HepG2 (cell line): ENCODE measurements at regions of chr7 and their contacts with region 1.

Region 1: DNA sequence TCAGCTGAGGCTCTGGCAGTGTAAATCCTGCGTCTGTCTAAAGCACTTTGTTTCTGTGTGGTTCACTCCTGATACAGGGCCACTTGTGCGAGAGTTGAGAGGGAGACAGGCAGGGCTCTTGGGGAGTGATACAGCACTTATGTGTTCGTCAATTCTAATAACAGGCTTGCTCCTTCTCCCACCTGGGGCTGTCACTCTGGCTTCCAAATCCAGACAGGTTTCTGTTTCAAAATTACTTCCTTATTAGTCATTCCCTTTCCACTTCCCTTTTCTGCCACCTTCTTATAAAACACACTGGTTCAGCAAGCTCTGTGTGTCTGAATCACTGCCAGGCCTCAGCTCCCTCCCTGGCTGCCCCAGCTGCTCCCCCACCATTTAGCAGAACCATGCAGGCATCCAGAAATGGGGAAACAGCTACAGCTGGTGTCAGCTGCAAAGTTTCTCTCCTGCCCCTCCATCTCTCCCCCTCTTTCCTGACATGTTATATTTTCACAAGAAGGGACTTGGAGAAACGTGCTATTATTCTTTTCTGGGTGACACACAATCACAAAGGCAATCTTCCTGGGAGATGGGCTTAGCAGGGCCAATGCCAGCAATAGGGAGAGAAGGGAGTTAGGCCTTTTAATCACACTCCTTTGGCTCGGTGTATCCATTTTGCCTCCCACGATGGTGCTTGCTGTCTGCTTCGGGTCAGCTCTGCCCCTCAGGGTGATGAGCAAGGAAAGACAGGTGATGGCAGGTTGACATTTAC is 58.4 kb upstream of the ZNRF2 start:
- DNase-seq: no peak
- ATAC-seq: peak; percentile 45; the same call in 2 of the 3 replicates
- H3K4me3 ChIP-seq: peak overlapping the region in 1 of 3 experiments; percentile 60; a peak in 2 of 6 replicates
- H3K27ac ChIP-seq: no peak overlapping the region
- H3K4me1 ChIP-seq: peaks cover 17% of the 10 kb centered on the region
- H3K27me3 ChIP-seq: no peaks in the 10 kb centered on the region
- CTCF ChIP-seq: no peak
- EP300 ChIP-seq: no peak
- POLR2A ChIP-seq: no peak
- RAD21 ChIP-seq: no peak

Region 2: GRCh38 chr7:30164567-30164966 is 61.5 kb before region 1 on chr7:
- CTCF ChIA-PET with region 1: no interaction called
- POLR2A ChIA-PET with region 1: no interaction called
- in situ Hi-C with region 1: no loop called
- intact Hi-C with region 1: loop called (anchors 5 kb)
- DNase-seq: peak; percentile 60
- ATAC-seq: peak; percentile 50
- H3K4me3 ChIP-seq: no peak overlapping the region
- H3K27ac ChIP-seq: no peak overlapping the region
- H3K4me1 ChIP-seq: peaks cover 60% of the 10 kb centered on the region
- H3K27me3 ChIP-seq: no peaks in the 10 kb centered on the region
- CTCF ChIP-seq: peak; percentile 71
- EP300 ChIP-seq: no peak
- POLR2A ChIP-seq: no peak
- RAD21 ChIP-seq: peak; percentile 72

Region 3: GRCh38 chr7:30255064-30255769 is 29.2 kb after region 1 on chr7:
- CTCF ChIA-PET with region 1: no interaction called
- POLR2A ChIA-PET with region 1: interaction called, 5 read pairs
- in situ Hi-C with region 1: no loop called
- intact Hi-C with region 1: loop called (anchors 2 kb)
- DNase-seq: peak; percentile 98
- ATAC-seq: peak; percentile 90
- H3K4me3 ChIP-seq: peak overlapping the region in 1 of 3 experiments; percentile 50; a peak in 1 of 6 replicates
- H3K27ac ChIP-seq: peak overlapping the region; percentile 72
- H3K4me1 ChIP-seq: peaks cover 57% of the 10 kb centered on the region
- H3K27me3 ChIP-seq: no peaks in the 10 kb centered on the region
- CTCF ChIP-seq: no peak; the same call in 1 of the 2 replicates
- EP300 ChIP-seq: peak; percentile 33 to 84; a peak in 2 of 4 replicates
- POLR2A ChIP-seq: no peak
- RAD21 ChIP-seq: 0 out of 2 replicates have a peak, but pooled peaks have one; percentile 30

Region 4: DNA sequence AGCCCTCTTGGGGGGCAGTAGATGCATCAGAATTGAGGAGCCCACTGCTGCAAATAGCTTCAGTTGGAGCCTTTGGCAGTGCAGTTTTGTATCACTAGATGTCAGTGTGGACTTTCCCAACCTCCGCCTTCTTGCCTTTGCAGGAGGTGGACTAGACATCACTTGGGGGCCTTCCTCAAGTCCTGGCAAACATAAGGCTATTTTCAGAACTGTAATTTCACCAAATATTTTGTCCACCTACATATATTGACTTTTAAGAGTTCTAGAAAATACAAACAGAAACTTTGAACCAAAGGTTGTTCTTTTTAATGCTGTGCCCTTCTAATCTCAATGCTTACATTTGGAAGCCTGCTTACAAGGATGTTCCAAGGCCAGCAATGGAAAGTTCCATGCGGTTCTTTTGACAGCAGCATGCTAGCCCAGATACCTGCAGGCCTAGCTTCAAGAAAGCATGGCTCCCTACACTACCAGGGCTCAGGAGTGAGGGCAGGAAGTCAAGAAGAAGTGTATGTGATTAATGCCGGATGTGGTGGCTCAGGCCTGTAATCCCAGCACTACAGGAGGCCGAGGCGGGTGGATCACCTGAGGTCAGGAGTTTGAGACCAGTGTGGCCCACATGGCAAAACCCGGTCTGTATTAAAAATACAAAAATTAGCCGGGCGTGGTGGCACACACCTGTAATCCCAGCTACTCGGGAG is 50.3 kb after region 1 on chr7:
- CTCF ChIA-PET with region 1: interaction called, 3 read pairs
- POLR2A ChIA-PET with region 1: no interaction called
- in situ Hi-C with region 1: no loop called
- intact Hi-C with region 1: loop called (anchors 2 kb)
- DNase-seq: peak; percentile 67
- ATAC-seq: peak; percentile 93
- H3K4me3 ChIP-seq: no peak overlapping the region
- H3K27ac ChIP-seq: no peak overlapping the region
- H3K4me1 ChIP-seq: peaks cover 48% of the 10 kb centered on the region
- H3K27me3 ChIP-seq: no peaks in the 10 kb centered on the region
- CTCF ChIP-seq: peak; percentile 88
- EP300 ChIP-seq: peak in 1 of 2 experiments; percentile 34; a peak in 2 of 4 replicates
- POLR2A ChIP-seq: no peak
- RAD21 ChIP-seq: peak; percentile 76

Region 5: GRCh38 chr7:30412810-30413504 is 186.9 kb after region 1 on chr7:
- CTCF ChIA-PET with region 1: interaction called, 24 read pairs
- POLR2A ChIA-PET with region 1: no interaction called
- in situ Hi-C with region 1: loop called (anchors 5 kb)
- intact Hi-C with region 1: loop called (anchors 2 kb)
- DNase-seq: peak; percentile 88
- ATAC-seq: peak; percentile 93
- H3K4me3 ChIP-seq: no peak overlapping the region
- H3K27ac ChIP-seq: no peak overlapping the region
- H3K4me1 ChIP-seq: peaks cover 19% of the 10 kb centered on the region
- H3K27me3 ChIP-seq: no peaks in the 10 kb centered on the region
- CTCF ChIP-seq: peak; percentile 84
- EP300 ChIP-seq: no peak
- POLR2A ChIP-seq: no peak
- RAD21 ChIP-seq: peak; percentile 75; the same call in 1 of the 2 replicates

Region 6: GRCh38 chr7:30564243-30564892 is 338.3 kb after region 1 on chr7:
- CTCF ChIA-PET with region 1: interaction called, 7 read pairs
- POLR2A ChIA-PET with region 1: no interaction called
- in situ Hi-C with region 1: no loop called
- intact Hi-C with region 1: loop called (anchors 1 kb)
- DNase-seq: peak; percentile 75
- ATAC-seq: peak; percentile 99
- H3K4me3 ChIP-seq: no peak overlapping the region
- H3K27ac ChIP-seq: no peak overlapping the region
- H3K4me1 ChIP-seq: no peaks in the 10 kb centered on the region
- H3K27me3 ChIP-seq: no peaks in the 10 kb centered on the region
- CTCF ChIP-seq: peak; percentile 95
- EP300 ChIP-seq: no peak
- POLR2A ChIP-seq: no peak
- RAD21 ChIP-seq: peak; percentile 93

Region 7: DNA sequence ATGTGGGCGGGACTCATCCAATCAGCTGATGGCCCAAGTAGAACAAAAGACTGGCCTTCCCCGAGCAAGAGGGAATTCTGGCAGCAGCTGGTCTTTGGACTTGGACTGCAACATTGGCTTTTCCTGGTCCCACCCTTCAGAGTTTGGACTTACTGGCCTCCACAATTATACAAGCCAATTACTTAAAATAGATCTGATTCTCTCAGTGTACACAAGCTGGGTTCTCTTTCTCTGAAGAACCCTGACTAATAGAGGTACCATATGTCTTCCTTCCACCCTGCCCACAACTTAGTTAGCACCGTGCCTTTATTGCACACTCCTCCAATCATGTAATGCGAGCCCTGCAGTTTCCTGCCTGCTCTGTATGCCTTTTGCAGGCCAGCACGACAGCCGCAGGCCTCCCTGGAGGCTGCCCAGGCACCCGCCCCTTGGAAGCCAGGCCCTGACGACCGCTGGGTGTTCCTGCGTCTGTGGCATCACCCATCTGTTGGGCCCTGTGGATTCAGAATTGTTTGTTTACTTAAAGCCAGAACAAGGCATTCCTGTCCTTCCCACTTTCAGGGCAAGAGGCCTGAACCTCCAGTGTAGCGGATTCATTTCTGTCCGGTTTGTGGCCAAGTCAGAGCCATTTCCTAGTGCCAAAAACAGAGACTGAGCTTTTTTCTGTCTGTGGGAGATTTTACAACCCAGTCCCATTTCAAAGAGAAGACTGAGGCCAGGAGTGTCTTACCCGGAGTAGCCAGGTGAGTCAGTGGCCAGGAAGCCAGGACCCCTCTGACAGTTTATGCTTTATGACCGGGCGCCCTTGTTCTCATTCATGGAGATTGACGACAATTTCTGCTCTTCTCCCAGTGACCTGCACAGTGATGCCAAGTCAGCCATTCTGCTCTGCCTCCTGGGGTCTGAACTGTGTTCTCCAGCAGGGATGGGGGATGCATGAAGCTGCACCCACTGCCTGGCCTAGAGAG is 524.9 kb after region 1 on chr7:
- CTCF ChIA-PET with region 1: no interaction called
- POLR2A ChIA-PET with region 1: no interaction called
- in situ Hi-C with region 1: no loop called
- intact Hi-C with region 1: no loop called
- DNase-seq: no peak
- ATAC-seq: peak; percentile 54
- H3K4me3 ChIP-seq: no peak overlapping the region
- H3K27ac ChIP-seq: no peak overlapping the region
- H3K4me1 ChIP-seq: peaks cover 12% of the 10 kb centered on the region
- H3K27me3 ChIP-seq: no peaks in the 10 kb centered on the region
- CTCF ChIP-seq: no peak
- EP300 ChIP-seq: no peak
- POLR2A ChIP-seq: no peak
- RAD21 ChIP-seq: no peak

Region 8: DNA sequence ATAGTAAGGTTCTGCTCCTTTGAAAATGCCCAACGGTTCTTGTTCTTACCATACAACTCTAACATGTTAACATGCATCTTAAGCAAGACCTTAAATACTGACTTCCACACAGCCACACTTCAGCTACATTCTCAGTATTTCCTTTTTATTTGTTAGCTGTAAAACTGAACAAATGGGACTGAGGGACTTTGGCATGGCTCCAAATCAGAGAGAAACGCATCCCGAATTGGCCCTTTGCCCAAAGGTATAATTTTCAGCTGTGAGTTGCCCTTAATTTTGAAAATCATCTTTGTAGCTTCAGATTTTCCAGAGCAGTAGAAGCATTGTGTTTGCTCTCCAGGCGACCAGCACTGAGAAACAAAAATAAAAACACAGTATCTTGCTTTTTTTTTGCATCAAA is 1058.1 kb after region 1 on chr7:
- CTCF ChIA-PET with region 1: no interaction called
- POLR2A ChIA-PET with region 1: no interaction called
- in situ Hi-C with region 1: no loop called
- intact Hi-C with region 1: no loop called
- DNase-seq: no peak
- ATAC-seq: no peak
- H3K4me3 ChIP-seq: no peak overlapping the region
- H3K27ac ChIP-seq: no peak overlapping the region
- H3K4me1 ChIP-seq: no peaks in the 10 kb centered on the region
- H3K27me3 ChIP-seq: no peaks in the 10 kb centered on the region; a peak in 1 of 5 replicates
- CTCF ChIP-seq: no peak
- EP300 ChIP-seq: no peak
- POLR2A ChIP-seq: no peak
- RAD21 ChIP-seq: no peak